Activated naive CD4-positive, alpha-beta T cell treated with anti-CD3 and anti-CD28 coated beads for 36 hours (primary cell): ENCODE measurements at regions of chr9 and their contacts with region 1.

Region 1: DNA sequence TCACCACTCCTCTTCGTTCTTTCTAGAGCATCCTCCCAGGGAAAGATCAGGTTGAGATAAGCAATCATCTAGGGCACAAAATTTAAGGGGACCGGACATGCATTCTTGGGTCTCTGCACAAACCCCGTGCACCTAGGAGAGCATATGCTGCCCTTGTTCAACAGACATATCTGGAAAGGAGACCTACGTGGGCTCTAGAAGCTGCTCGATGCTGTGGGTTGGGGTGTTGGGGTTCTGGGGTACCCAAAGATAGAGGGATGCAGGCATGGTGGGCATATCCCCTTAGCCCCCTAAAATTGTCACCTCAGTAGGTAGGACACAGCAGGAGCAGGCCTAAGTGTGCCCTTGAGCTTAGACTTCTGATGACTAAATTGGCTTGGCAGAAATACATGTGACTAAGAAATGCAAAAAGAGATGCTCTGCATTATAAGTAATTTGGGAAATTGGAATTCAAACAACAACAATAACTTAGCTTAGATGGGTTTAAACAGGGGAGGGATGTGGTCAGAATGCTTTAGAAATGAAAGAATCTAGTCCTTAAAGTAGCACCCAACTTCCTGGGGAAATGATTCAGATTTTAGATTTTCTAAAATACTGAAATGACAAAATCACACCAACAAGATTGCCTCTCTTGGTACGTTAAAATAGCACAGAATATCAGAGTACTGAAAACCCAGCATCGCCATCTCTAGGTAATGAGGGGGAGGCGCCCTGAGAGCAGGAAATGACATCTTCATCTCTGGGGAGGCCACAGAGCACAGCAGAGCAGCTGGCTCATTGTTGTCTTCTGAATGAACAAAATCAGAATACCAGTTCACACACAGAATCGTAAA is 172.3 kb downstream of the GNA14 start:
- DNase-seq: peak; percentile 87
- H3K4me3 Mint-ChIP-seq: no peak overlapping the region
- H3K27ac Mint-ChIP-seq: peak overlapping the region; percentile 91
- H3K4me1 Mint-ChIP-seq: peaks cover 27% of the 10 kb centered on the region
- H3K27me3 Mint-ChIP-seq: no peaks in the 10 kb centered on the region

Region 2: GRCh38 chr9:77177161-77177893 is 298.5 kb before region 1 on chr9 and contains the start of gene VPS13A:
- CTCF ChIA-PET with region 1: no interaction called
- intact Hi-C with region 1: loop called (anchors 1 kb)
- DNase-seq: peak; percentile 96
- H3K4me3 Mint-ChIP-seq: peak within 1 kb of the TSS; percentile 80
- H3K27ac Mint-ChIP-seq: peak within 1 kb of the TSS; percentile 79
- H3K4me1 Mint-ChIP-seq: peaks cover 23% of the 10 kb centered on the region
- H3K27me3 Mint-ChIP-seq: no peaks in the 10 kb centered on the region
- total RNA-seq, gene VPS13A: 26.8 to 26.9 TPM

Region 3: DNA sequence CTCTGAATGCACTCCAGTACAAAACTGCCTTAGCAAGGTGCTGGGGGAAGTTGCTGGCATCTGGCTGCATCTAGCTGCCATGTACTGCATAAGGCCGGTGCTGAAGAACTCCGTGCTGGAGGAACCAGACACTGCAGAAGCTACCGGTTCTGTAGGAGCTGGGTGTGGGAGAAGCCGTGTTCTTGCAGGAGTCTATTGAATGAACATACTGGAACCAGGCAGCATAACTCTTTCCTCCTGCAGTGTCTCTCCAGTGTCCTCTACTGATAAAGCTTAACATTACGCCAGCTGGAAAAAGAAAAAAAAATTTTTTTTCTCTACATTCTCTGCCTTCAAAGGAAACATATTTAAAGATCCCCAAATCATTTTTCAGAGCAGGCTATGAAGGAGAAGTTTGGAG is 260.0 kb before region 1 on chr9:
- CTCF ChIA-PET with region 1: no interaction called
- intact Hi-C with region 1: no loop called
- DNase-seq: no peak
- H3K4me3 Mint-ChIP-seq: no peak overlapping the region
- H3K27ac Mint-ChIP-seq: no peak overlapping the region
- H3K4me1 Mint-ChIP-seq: no peaks in the 10 kb centered on the region
- H3K27me3 Mint-ChIP-seq: no peaks in the 10 kb centered on the region

Region 4: DNA sequence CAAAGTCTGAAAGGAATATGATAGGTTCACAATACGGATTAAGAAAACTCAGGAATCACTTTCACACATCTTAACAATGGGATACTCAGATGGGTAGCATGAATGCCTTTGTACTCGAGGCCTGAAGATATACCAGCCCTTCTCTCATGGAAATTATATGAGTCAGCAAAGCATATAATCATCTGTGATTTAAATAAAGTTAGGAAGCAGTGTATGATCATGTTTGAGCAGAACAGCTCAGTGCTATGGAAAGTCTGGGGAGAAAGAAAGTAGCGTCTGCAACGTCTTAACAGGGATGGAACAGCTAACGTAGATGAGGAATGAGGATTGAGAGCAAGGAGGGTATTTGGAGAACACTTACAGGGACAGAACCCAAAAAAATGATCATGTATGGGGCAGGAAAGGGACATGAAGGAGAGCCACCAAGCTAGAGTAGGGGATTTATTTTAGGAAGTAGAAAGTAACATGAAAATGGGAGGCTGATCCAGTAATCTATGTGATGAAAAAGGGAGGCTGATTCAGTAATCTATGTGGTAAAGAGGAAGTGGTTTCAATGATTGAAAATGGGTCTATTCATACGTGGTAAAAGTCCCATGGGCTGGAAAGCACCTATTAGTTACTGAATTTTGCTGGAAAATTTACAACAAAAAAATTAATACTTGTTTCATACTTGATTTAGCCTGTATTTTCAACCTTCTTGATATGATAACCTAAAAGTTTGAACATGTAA is 86.3 kb after region 1 on chr9:
- CTCF ChIA-PET with region 1: no interaction called
- intact Hi-C with region 1: loop called (anchors 1 kb)
- DNase-seq: no peak
- H3K4me3 Mint-ChIP-seq: no peak overlapping the region
- H3K27ac Mint-ChIP-seq: no peak overlapping the region
- H3K4me1 Mint-ChIP-seq: peaks cover 7% of the 10 kb centered on the region
- H3K27me3 Mint-ChIP-seq: peaks cover 10% of the 10 kb centered on the region

Region 5: DNA sequence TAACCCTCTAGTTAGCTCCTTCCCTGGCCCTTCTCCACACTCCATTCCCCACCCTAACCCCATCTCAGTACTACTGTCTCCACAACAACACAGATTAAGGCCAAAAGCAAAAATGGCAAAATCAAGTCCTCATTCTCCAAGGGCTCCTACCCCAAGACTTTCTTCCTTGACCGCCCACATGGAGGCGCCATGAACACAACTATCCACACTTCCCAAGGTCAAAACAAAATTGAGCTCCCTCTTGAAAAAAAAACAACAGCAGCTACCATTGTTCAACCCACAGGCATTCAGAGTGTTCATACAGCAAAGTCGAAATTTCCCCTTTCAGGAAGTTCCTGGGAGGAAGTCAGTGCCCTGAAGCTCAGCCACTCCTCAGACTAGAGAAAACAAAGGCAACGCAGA is 501.4 kb after region 1 on chr9:
- CTCF ChIA-PET with region 1: no interaction called
- intact Hi-C with region 1: loop called (anchors 1 kb)
- DNase-seq: peak; percentile 80
- H3K4me3 Mint-ChIP-seq: peak overlapping the region; percentile 15
- H3K27ac Mint-ChIP-seq: peak overlapping the region; percentile 83
- H3K4me1 Mint-ChIP-seq: peaks cover 55% of the 10 kb centered on the region
- H3K27me3 Mint-ChIP-seq: no peaks in the 10 kb centered on the region

Region 6: DNA sequence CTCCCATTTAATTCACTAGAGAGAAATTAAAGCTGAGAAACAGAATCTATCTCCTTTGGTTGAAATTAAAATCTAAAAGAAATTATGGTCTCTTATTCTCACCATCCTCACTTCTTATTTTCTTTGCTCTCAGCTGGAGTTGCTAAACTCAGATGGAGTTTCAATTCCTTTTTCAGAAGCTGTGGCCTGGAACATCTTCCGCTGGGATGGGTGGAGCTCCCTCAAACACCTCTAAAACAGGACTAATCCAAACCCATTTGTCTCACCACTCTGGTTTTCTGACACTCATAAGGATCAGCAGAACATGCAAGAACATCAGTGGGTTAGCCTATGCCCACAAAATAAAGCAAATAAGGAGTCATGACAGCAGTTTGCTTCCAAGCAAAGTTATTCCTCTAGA is 720.4 kb after region 1 on chr9:
- CTCF ChIA-PET with region 1: no interaction called
- intact Hi-C with region 1: loop called (anchors 1 kb)
- DNase-seq: no peak
- H3K4me3 Mint-ChIP-seq: no peak overlapping the region
- H3K27ac Mint-ChIP-seq: no peak overlapping the region
- H3K4me1 Mint-ChIP-seq: peaks cover 14% of the 10 kb centered on the region
- H3K27me3 Mint-ChIP-seq: no peaks in the 10 kb centered on the region